IMR-90 (cell line): ENCODE measurements at regions of chr1 and their contacts with region 1.

Region 1: GRCh38 chr1:1545946-1546737 is 5.7 kb upstream of the TMEM240 start:
- DNase-seq: peak; percentile 34
- ATAC-seq: peak; percentile 30
- H3K4me3 ChIP-seq: no peak overlapping the region
- H3K27ac ChIP-seq: peak overlapping the region; percentile 18; the same call in 1 of the 2 replicates
- H3K4me1 ChIP-seq: peaks cover 6% of the 10 kb centered on the region; the same call in 1 of the 2 replicates
- H3K27me3 ChIP-seq: no peaks in the 10 kb centered on the region
- CTCF ChIP-seq: no peak
- POLR2A ChIP-seq: no peak
- RAD21 ChIP-seq: no peak

Region 2: DNA sequence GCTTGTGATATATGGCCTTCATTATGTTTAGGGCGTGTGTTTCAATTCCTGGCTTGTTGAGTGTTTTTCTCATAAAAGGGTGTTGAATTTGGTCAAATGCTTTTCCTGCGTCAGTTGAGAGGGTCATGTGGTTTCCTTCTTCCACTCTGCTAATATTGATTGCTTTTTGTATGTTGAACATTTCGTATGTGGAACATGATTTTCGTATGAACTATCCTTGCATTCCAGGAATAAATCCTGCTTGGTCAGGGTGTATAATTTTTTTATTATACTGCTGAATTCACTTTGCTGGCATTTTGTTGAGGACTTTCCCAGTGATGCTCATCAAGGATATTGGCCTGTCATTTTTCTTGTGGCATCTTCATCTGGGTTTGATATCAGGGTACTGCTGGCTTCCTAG is 38.8 kb before region 1 on chr1:
- CTCF ChIA-PET with region 1: no interaction called
- POLR2A ChIA-PET with region 1: interaction called, 14 read pairs
- dilution Hi-C with region 1: no loop called
- in situ Hi-C with region 1: no loop called
- intact Hi-C with region 1: no loop called
- DNase-seq: no peak
- ATAC-seq: no peak
- H3K4me3 ChIP-seq: no peak overlapping the region
- H3K27ac ChIP-seq: no peak overlapping the region
- H3K4me1 ChIP-seq: peaks cover 3% of the 10 kb centered on the region; the same call in 1 of the 2 replicates
- H3K27me3 ChIP-seq: no peaks in the 10 kb centered on the region
- CTCF ChIP-seq: no peak
- POLR2A ChIP-seq: no peak
- RAD21 ChIP-seq: no peak

Region 3: DNA sequence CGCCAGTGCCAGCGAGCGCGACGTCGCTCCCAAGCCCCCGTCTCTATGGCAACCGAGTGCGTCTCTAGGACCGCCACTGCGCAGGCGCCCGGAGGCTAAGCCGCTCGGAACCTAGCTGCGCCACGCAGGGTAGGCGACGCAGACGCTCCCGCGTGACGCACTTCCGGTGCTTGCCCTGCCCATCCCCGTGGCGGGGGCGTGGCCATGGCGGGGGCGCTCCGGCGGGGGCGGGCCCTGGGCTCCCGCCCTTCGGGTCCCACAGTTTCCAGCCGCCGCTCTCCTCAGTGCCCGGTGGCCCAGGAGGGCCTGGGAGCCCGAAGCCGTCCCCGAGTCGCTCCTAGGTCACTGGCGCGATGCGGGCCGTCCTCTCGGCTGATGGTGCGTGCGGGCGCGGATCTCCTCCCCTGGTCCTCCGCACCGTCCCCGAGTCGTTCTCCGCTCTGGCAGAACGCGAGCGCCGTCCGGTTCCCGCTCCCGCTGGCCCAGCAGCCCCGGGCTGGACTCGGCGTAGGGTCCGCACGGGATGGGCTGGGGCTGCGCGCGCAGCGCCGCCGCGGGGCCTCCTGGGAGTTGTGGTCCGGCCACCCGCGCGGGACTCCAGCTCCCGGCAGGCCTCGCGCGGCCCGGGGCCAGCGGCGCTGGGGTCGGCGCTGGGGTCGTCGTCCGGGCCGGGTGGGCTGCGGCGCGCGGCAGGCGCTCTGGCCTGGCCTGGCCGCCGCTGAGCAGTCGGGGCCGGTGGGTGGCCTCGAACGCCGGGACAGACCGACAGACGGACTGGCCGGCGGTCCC is 69.3 kb after region 1 on chr1 and contains the start of gene MIB2:
- CTCF ChIA-PET with region 1: no interaction called
- POLR2A ChIA-PET with region 1: no interaction called
- dilution Hi-C with region 1: no loop called
- in situ Hi-C with region 1: no loop called
- intact Hi-C with region 1: no loop called
- DNase-seq: peak; percentile 95
- ATAC-seq: peak; percentile 90
- H3K4me3 ChIP-seq: peak within 1 kb of the TSS; percentile 94
- H3K27ac ChIP-seq: peak within 1 kb of the TSS; percentile 100
- H3K4me1 ChIP-seq: peaks cover 7% of the 10 kb centered on the region
- H3K27me3 ChIP-seq: no peaks in the 10 kb centered on the region
- CTCF ChIP-seq: no peak
- POLR2A ChIP-seq: peak; percentile 97
- RAD21 ChIP-seq: no peak
- total RNA-seq, gene MIB2: 17.2 and 18.1 TPM in 2 replicates